Gastrocnemius medialis (tissue), 4 donors: ENCODE measurements at regions of chr16 and their contacts with region 1.

Region 1: GRCh38 chr16:82111944-82112343 is 58.1 kb downstream of the MPHOSPH6 start:
- DNase-seq: no peak
- ATAC-seq: no peak
- H3K4me3 ChIP-seq: no peak overlapping the region
- H3K27ac ChIP-seq: no peak overlapping the region
- H3K4me1 ChIP-seq: no peaks in the 10 kb centered on the region
- H3K27me3 ChIP-seq: no peaks in the 10 kb centered on the region
- CTCF ChIP-seq: no peak
- POLR2A ChIP-seq: no peak

Region 2: GRCh38 chr16:82011199-82011641 is 100.7 kb before region 1 on chr16 and contains the start of gene SDR42E1:
- in situ Hi-C with region 1: loop called in 1 of 4 experiments (anchors 25 kb)
- intact Hi-C with region 1: no loop called
- DNase-seq: no peak
- ATAC-seq: no peak
- H3K4me3 ChIP-seq: no peak within 1 kb of the TSS
- H3K27ac ChIP-seq: no peak within 1 kb of the TSS
- H3K4me1 ChIP-seq: no peaks in the 10 kb centered on the region
- H3K27me3 ChIP-seq: peaks cover 0 to 8% (median 0%) of the 10 kb centered on the region in 3 donors
- CTCF ChIP-seq: no peak
- POLR2A ChIP-seq: no peak
- total RNA-seq, gene SDR42E1: 0.02 TPM in 1 of 4 donors, not detected in the others

Region 3: GRCh38 chr16:82031116-82032084 is 80.5 kb before region 1 on chr16:
- in situ Hi-C with region 1: no loop called
- intact Hi-C with region 1: no loop called
- DNase-seq: no peak
- ATAC-seq: no peak
- H3K4me3 ChIP-seq: no peak overlapping the region
- H3K27ac ChIP-seq: no peak overlapping the region
- H3K4me1 ChIP-seq: no peaks in the 10 kb centered on the region
- H3K27me3 ChIP-seq: no peaks in the 10 kb centered on the region
- CTCF ChIP-seq: no peak
- POLR2A ChIP-seq: no peak

Region 4: DNA sequence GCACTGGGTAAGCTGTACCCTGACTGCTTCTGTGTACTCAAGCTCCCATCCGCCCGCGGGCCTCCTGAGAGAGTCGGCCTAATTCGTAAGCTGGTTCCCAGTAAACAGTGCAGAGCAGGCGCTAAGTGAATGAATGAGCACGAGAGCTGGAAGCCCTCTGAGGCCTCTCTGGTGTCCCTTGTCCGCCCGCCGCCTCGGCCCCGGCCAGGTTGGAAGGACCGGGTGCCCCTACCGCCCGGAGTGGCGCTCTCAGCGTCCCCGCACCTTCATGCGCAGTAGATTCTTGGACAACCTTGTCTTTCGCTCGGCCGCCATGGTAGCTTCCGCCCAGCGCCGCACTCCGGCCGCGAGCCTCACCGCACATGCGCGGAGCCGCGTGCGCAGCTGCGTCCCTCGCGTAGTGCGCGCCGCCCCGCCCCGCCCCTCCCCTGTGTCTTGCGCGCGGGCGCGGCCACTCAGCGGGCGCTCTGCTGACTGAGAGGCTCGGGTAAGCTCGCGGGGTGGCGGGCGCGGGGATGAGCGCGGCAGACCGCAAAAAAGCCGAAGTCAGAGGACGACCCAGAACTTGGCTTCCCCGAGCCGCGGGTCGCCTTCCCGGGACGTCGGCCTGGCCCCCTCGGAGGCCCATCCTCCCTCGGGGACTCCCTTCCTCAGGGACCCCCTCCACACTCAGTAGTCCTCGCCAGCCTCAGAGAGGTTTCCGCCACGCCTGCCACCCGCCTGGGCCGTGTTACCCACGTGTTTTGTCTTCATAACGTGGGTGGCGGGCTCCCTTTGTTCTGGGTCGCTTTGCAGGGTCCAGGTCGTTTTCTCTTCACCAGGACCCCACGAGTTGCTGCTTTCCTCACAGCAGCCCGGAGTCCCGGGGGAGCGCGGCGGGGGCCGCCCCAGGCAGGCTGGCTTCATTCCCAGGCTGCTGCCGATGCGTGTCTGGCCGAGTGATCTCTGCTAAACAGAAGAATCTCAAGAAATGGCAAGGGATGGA is 58.2 kb after region 1 on chr16 and contains the start of gene MPHOSPH6:
- in situ Hi-C with region 1: no loop called
- intact Hi-C with region 1: no loop called
- DNase-seq: peak; percentile 73 to 83
- ATAC-seq: peak; percentile 95 to 98
- H3K4me3 ChIP-seq: peak within 1 kb of the TSS; percentile 73 to 80 (median 79)
- H3K27ac ChIP-seq: peak within 1 kb of the TSS; percentile 68 to 80 (median 74)
- H3K4me1 ChIP-seq: peaks cover 12 to 13% of the 10 kb centered on the region in 2 donors
- H3K27me3 ChIP-seq: peaks cover 0 to 4% (median 0%) of the 10 kb centered on the region in 3 donors
- CTCF ChIP-seq: peak in 1 of 5 experiments; percentile 25
- POLR2A ChIP-seq: no peak
- total RNA-seq, gene MPHOSPH6: 6.1 to 12.0 (median 9.3) TPM